Left cardiac atrium (tissue), 4 donors: ENCODE measurements at regions of chr2 and their contacts with region 1.

Region 1: GRCh38 chr2:113248997-113249770 is 29.5 kb downstream of the PAX8 start:
- DNase-seq: peak; percentile 81
- ATAC-seq: peak; percentile 76 to 78

Region 2: GRCh38 chr2:113138428-113139322 is 110.5 kb before region 1 on chr2:
- intact Hi-C with region 1: loop called in 1 of 2 experiments (anchors 5 kb)
- DNase-seq: no peak
- ATAC-seq: peak; percentile 79 to 80

Region 3: DNA sequence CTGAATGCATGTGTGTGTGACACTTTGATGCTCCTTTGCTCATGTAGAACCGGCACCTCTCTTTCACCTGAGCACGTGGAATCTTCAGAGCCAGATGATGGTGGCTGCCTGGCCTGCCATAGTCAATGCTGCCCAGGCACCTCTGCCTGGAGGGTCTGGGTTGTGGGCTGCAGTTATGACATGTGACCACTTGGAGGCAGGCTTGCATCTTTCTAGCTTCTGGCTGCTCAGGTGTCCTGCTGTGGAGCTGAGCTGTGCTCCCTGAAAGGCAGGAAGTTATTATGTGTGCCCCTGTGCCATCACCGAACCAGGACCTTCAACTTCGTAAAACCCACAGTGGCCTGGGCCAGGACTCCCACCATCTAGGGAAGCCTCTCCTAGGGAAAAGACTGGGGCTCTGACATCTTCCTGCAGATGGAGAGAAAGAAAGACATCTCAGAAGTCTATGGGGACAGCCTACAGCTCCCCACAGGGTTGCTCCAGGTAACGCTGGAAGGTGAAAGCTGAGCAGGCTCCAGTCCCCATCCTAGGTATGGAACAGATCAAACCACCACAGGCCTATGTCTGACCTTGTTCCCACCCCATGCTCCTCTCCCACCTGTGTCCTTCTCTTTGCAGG is 45.2 kb before region 1 on chr2:
- intact Hi-C with region 1: loop called (anchors 2 to 5 kb)
- DNase-seq: peak; percentile 69
- ATAC-seq: peak; percentile 68 to 75

Region 4: DNA sequence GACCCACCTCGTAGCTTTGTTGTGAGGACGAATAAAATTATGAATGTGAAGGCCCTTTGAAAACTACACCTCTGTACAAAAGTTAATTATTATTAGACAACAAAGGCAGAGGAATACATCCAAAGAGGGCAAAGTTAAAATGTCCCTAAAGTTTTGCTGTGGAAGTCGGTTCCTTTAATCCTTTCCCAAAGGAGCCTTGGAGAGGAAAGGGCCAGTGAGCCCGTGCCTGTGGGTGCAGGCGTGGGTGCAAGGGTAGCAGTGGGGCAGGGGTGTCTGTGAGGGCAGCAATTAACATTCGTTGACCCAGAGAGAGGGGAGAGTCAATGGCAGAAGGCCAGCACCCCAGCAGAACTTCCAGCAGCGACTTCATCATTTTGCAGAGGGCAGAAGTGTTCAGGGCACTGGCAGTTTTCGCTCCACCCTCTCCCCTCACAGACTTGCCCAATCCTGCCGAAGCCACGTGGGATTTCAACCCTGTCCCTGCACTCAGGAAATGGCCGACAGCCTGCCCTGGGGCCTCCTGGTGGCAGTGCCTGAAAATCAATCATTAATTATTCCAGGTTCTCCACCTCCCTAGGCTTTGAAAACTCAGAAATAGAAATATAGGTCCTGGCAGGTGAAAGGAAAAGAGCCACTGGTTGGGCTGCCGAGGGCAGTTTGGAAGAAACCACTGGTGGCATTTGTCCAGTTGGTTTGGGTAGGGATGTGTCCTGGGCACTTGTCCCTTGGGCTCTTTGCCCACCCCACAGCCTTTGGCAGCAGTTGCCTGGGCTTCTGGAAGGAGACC is 33.8 kb after region 1 on chr2:
- intact Hi-C with region 1: no loop called
- DNase-seq: peak; percentile 39
- ATAC-seq: peak; percentile 44 to 69

Region 5: GRCh38 chr2:113342650-113343049 is 93.5 kb after region 1 on chr2:
- intact Hi-C with region 1: no loop called
- DNase-seq: no peak
- ATAC-seq: peak in 1 of 2 donors; percentile 28

Region 6: DNA sequence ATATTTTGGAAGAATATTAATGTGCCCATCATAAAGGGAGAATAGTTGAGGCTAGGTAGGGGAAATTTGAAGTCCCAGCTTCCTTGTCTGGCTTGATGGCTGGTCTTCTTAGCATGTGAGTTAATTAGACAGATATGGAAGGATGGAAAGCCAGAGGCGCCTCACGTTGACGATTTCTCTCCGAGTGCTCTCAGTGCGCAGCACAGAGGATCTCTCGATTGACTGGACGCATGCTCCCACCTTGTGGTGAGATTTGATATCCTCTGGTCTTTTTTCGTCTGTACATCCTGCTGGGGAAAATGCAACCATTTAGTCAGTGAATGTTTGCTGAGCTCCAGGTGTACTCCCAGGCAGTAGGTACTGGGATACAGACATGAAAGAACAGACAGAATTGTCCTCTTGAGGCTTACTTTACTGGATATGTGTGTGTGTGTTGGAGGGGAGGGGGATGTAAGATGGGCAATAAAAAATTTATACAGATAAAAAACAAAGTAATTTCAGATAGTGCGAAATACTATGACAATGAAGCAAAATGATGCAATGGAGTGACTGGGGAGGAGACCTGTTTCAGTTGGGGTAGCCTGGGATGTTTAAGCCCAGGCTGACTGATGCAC is 121.4 kb after region 1 on chr2:
- intact Hi-C with region 1: loop called (anchors 1 to 5 kb)
- DNase-seq: peak; percentile 61
- ATAC-seq: peak; percentile 92 to 94